Right lobe of liver (tissue), 6 donors: ENCODE measurements at regions of chr9 and their contacts with region 1.

Region 1: DNA sequence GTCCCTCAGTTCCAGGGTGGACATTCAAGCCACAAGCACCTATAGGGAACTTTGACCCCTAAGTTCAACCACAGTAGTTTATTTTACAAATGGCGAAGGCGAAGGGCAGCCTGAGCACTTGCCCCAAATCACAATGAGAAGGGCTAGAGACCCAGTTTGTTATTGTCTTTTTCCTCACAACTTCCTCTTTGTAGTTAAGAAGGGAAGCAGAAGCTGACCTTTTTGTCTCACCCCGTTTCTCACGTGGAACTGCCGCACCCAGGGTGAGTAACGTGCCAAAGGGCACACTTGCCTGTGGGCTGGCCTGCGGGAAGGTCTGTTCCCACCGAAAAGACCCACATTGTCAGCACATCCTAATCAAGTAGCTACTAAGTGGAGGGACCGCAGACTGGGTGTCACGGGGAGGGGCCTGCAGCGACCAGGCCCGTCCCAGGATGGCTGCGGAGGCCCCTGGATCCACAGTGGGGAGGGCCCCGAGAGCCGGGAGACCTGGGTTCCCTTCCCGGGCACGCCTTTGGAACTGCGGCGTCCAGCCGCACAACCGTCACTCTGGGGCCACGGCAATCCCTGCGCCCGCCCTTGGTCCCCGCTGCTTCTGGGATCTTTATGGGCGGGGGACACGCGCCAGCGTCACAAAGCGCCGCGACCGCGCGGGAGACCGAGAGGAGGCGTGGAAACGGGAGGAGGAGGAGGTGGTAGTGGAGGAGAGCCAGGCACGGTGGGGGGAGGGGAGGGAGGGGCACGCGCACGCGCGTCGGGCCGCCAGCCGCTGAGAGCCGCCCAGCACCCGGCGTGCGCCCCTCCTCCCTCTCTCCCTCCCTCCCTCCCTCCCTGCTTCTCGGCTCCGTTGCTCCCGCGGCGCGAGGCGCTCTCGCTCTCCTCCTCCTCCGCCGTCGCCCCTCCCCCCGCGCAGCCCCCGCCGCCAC is at the start of gene UBE2R2:
- DNase-seq: peak; percentile 94 to 97 (median 96)
- ATAC-seq: peak; percentile 79 to 90 (median 86)
- H3K4me3 ChIP-seq: peak within 1 kb of the TSS; percentile 90 to 92 (median 91)
- H3K27ac ChIP-seq: peak within 1 kb of the TSS; percentile 98
- H3K4me1 ChIP-seq: peaks cover 0 to 37% (median 16%) of the 10 kb centered on the region in 4 donors
- H3K27me3 ChIP-seq: no peaks in the 10 kb centered on the region
- CTCF ChIP-seq: no peak
- POLR2A ChIP-seq: peak; percentile 93
- total RNA-seq, gene UBE2R2: 21.1 to 27.4 (median 21.8) TPM

Region 2: DNA sequence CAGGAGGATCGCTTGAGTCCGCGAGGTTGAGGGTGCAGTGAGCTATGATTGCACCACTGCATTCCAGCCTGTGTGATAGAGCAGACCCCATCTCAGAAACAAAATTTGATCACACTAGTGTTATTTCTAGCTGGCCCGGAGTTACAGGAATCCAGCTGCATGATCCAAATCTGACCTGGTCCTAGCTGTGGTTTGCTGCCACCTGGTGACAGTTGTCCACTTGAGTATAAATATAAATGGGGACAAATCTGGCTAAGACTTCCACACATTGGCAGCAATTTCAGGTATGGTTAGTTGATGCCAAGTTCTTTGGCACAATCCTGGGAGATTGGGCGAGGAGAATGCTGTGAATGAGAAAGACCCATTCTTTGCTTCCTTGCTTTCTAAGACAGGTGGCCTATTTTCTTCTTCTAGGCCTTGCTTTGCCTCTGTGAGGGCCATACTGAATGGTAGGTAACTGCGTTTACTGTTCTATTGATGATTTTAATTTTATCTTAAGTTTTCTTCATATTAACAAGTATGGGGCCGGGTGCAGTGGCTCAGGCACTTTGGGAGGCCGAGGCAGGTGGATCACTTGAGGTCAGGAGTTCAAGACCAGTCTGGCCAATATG is 35.7 kb after region 1 on chr9:
- intact Hi-C with region 1: loop called in 1 of 2 experiments (anchors 5 kb)
- DNase-seq: peak; percentile 67 to 85 (median 77)
- ATAC-seq: peak; percentile 81 to 91 (median 85)
- H3K4me3 ChIP-seq: no peak overlapping the region
- H3K27ac ChIP-seq: peak overlapping the region in 1 of 3 donors; percentile 14
- H3K4me1 ChIP-seq: peaks cover 0 to 71% (median 33%) of the 10 kb centered on the region in 4 donors
- H3K27me3 ChIP-seq: no peaks in the 10 kb centered on the region
- CTCF ChIP-seq: peak; percentile 73 to 85 (median 74)
- POLR2A ChIP-seq: no peak